ENCODE measurements at regions of chr13 and their contacts with region 1.

Region 1: GRCh38 chr13:48749699-48750473 is 96.2 kb downstream of the CYSLTR2 start:
- DNase-seq: no peak
- H3K4me3 ChIP-seq: no peak overlapping the region
- H3K27ac ChIP-seq: peak overlapping the region in 1 of 2 donors; percentile 30
- H3K4me1 ChIP-seq: no peaks in the 10 kb centered on the region
- H3K27me3 ChIP-seq: no peaks in the 10 kb centered on the region
- CTCF ChIP-seq: peak in 2 of 4 experiments; percentile 21 to 36
- POLR2A ChIP-seq: no peak

Region 2: DNA sequence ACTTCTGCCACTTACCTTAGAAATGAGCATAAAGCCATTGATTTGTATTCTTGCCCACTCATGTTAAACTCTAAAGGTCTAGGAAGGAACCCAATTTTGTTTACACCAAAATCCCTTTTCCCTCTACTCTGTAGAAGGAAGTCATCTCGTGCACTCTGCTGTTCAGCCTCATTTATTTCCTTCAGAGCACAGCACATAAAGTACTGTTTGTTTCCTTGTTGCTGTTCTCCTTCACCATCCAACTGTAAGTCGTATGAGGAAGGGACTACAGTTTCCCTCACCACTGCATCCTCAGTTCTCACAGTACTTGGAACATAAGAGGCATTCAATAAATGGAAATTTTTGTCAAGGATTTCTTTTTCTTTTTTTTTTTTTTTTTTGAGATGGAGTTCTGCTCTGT is 522.4 kb after region 1 on chr13:
- intact Hi-C with region 1: loop called (anchors 10 kb)
- DNase-seq: no peak
- H3K4me3 ChIP-seq: no peak overlapping the region
- H3K27ac ChIP-seq: no peak overlapping the region
- H3K4me1 ChIP-seq: no peaks in the 10 kb centered on the region
- H3K27me3 ChIP-seq: no peaks in the 10 kb centered on the region
- CTCF ChIP-seq: no peak
- POLR2A ChIP-seq: no peak